ENCODE measurements at regions of chr13 and their contacts with region 1.

Region 1: GRCh38 chr13:79516595-79516994 is 35.6 kb downstream of the NDFIP2 start:
- DNase-seq: no peak
- ATAC-seq: no peak
- H3K4me3 ChIP-seq: no peak overlapping the region
- H3K27ac ChIP-seq: no peak overlapping the region
- H3K4me1 ChIP-seq: no peaks in the 10 kb centered on the region
- H3K27me3 ChIP-seq: no peaks in the 10 kb centered on the region
- CTCF ChIP-seq: no peak
- EP300 ChIP-seq: no peak
- POLR2A ChIP-seq: no peak
- RAD21 ChIP-seq: no peak

Region 2: DNA sequence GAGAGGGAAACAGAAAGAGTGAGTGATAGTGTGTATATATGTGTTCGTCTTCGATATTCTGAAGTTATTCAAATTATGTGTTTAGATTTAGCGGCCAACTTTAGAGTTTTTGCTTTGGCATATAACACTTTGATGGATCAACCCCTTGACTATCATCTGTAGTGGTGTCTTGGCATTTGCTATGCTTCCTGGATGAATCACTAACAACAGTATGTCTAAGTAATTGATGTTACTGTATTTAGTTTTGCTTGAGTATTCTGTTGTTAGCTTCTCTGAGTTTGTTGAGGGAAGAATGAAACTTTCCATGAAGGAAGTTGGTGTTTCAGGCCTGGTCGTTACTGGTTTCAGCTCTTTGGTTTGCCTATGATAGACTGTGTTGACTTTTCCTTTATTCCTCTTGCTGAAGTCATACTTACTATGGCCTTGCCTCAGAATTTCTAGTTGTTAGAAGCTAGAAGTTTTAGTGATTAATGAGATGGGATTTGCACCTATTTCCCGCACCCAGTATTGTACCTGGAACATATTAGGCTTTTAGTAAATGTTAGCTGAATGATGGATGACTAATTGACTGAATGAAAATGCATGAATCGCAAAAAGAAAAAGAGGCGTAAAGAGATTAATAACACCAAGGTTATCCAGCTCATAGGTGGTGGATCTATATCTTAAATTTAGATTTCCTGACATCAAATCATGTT is 14.9 kb before region 1 on chr13:
- CTCF ChIA-PET with region 1: interaction called, 9 read pairs
- POLR2A ChIA-PET with region 1: interaction called, 8 read pairs
- RAD21 ChIA-PET with region 1: interaction called, 3 read pairs
- SMC1A ChIA-PET with region 1: interaction called, 24 read pairs
- in situ Hi-C with region 1: no loop called
- intact Hi-C with region 1: no loop called
- DNase-seq: no peak
- ATAC-seq: no peak
- H3K4me3 ChIP-seq: no peak overlapping the region
- H3K27ac ChIP-seq: no peak overlapping the region
- H3K4me1 ChIP-seq: no peaks in the 10 kb centered on the region; the same call in 1 of the 2 replicates
- H3K27me3 ChIP-seq: no peaks in the 10 kb centered on the region
- CTCF ChIP-seq: no peak
- EP300 ChIP-seq: no peak
- POLR2A ChIP-seq: no peak
- RAD21 ChIP-seq: no peak

Region 3: GRCh38 chr13:79528759-79529191 is 12.2 kb after region 1 on chr13:
- CTCF ChIA-PET with region 1: interaction called, 7 read pairs
- POLR2A ChIA-PET with region 1: interaction called, 3 read pairs
- RAD21 ChIA-PET with region 1: interaction called, 3 read pairs
- SMC1A ChIA-PET with region 1: interaction called, 21 read pairs
- in situ Hi-C with region 1: no loop called
- intact Hi-C with region 1: no loop called
- DNase-seq: no peak
- ATAC-seq: no peak
- H3K4me3 ChIP-seq: no peak overlapping the region
- H3K27ac ChIP-seq: no peak overlapping the region
- H3K4me1 ChIP-seq: peaks cover 6% of the 10 kb centered on the region; the same call in 1 of the 2 replicates
- H3K27me3 ChIP-seq: no peaks in the 10 kb centered on the region
- CTCF ChIP-seq: no peak
- EP300 ChIP-seq: no peak
- POLR2A ChIP-seq: no peak
- RAD21 ChIP-seq: no peak